ENCODE measurements at regions of chr13 and their contacts with region 1.

Region 1: GRCh38 chr13:91133941-91134802 is 213.3 kb upstream of the MIR17HG start:
- DNase-seq: no peak
- H3K4me3 ChIP-seq: no peak overlapping the region
- H3K27ac ChIP-seq: no peak overlapping the region
- H3K4me1 ChIP-seq: peaks cover 0 to 7% of the 10 kb centered on the region in 2 donors
- H3K27me3 ChIP-seq: no peaks in the 10 kb centered on the region
- CTCF ChIP-seq: peak; percentile 53 to 82 (median 75)

Region 2: DNA sequence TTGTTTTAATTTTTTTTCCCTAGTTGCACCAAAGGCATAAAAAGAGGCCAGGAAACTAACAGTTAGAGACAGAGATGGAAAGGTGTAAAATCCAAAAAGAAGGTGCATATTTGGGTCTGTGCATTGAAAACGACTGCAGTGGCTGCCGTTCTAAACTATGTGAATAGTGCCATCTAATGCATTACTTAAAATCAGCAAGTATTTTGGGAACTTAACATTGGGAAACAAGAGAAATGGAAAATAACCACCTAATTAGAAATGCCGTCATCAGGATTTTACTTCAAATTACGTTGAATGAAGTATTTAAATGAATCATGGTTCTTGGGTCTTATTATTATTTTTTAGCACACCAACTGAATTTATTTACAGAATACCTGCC is 23.8 kb after region 1 on chr13:
- intact Hi-C with region 1: loop called (anchors 1 kb)
- DNase-seq: no peak
- H3K4me3 ChIP-seq: no peak overlapping the region
- H3K27ac ChIP-seq: no peak overlapping the region
- H3K4me1 ChIP-seq: no peaks in the 10 kb centered on the region
- H3K27me3 ChIP-seq: no peaks in the 10 kb centered on the region
- CTCF ChIP-seq: peak in 2 of 3 experiments; percentile 5 to 45

Region 3: DNA sequence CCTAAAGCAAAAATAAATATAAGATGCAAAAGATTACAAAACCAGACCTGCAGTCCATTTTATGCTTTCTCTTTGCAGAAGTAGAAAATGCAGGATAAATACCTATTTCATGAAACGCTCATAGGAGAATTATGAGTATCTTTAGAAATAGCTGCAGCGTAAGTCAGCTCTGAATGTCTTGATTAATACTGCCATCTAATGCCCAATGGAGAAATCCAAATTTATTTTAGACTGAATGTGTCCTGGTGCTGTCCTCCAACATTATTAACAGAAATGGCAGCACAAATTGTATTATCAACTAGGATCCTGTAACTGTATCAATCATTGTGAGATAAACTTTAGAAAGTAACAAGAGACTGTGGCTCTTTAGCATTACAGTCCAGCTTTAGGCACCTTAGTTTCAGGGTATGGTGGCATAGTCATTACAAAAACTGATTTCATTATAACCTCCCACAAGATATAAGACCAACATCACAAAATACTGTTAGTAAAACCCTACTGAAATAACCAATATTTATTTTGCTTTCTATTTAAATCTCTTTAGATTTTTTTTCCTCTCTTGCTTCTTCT is 51.2 kb after region 1 on chr13:
- intact Hi-C with region 1: loop called (anchors 2 kb)
- DNase-seq: no peak
- H3K4me3 ChIP-seq: no peak overlapping the region
- H3K27ac ChIP-seq: no peak overlapping the region
- H3K4me1 ChIP-seq: no peaks in the 10 kb centered on the region
- H3K27me3 ChIP-seq: no peaks in the 10 kb centered on the region
- CTCF ChIP-seq: peak in 2 of 3 experiments; percentile 36 to 46

Region 4: GRCh38 chr13:91609353-91609752 is 475.2 kb after region 1 on chr13:
- intact Hi-C with region 1: no loop called
- DNase-seq: no peak
- H3K4me3 ChIP-seq: no peak overlapping the region
- H3K27ac ChIP-seq: no peak overlapping the region
- H3K4me1 ChIP-seq: no peaks in the 10 kb centered on the region
- H3K27me3 ChIP-seq: no peaks in the 10 kb centered on the region
- CTCF ChIP-seq: no peak

Measured in ascending aorta (tissue), 2 donors.